ENCODE measurements at regions of chr10 and their contacts with region 1.

Region 1: GRCh38 chr10:89217057-89217990 is 10.2 kb upstream of the CH25H start:
- DNase-seq: peak; percentile 30
- H3K4me3 ChIP-seq: no peak overlapping the region; a peak in 1 of 4 replicates
- H3K27ac ChIP-seq: peak overlapping the region; percentile 30 to 55
- H3K4me1 ChIP-seq: peaks cover 4 to 14% of the 10 kb centered on the region in 2 experiments; a peak in 3 of 4 replicates
- H3K27me3 ChIP-seq: no peaks in the 10 kb centered on the region
- CTCF ChIP-seq: peak; percentile 91
- EP300 ChIP-seq: no peak
- RAD21 ChIP-seq: peak; percentile 78

Region 2: GRCh38 chr10:88828310-88828709 is 389.0 kb before region 1 on chr10:
- CTCF ChIA-PET with region 1: no interaction called
- POLR2A ChIA-PET with region 1: no interaction called
- DNase-seq: no peak
- H3K4me3 ChIP-seq: no peak overlapping the region
- H3K27ac ChIP-seq: no peak overlapping the region
- H3K4me1 ChIP-seq: peaks cover 0 to 2% of the 10 kb centered on the region in 2 experiments; a peak in 1 of 4 replicates
- H3K27me3 ChIP-seq: no peaks in the 10 kb centered on the region
- CTCF ChIP-seq: no peak
- EP300 ChIP-seq: no peak
- RAD21 ChIP-seq: no peak

Region 3: DNA sequence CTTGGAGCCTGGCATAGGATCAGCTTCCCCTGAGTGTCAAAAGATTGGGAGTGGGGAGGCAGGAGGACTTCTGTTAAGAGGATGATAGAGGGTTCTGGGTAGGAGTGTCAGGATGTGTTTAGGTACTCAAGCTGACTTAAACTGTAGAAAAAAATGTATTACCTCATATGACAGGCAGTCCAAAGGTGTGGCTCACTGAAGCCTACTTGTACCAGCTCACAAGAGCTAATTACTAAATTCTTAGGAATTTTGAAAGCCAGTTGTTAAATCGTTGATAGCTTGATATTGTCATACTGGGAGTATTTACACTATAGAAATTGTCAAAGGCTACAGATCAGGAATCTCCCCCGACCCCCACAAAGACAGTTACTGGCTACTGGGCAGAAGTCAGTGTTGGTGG is 194.6 kb before region 1 on chr10:
- CTCF ChIA-PET with region 1: interaction called, 15 read pairs
- POLR2A ChIA-PET with region 1: no interaction called
- DNase-seq: no peak
- H3K4me3 ChIP-seq: no peak overlapping the region
- H3K27ac ChIP-seq: no peak overlapping the region
- H3K4me1 ChIP-seq: no peaks in the 10 kb centered on the region
- H3K27me3 ChIP-seq: no peaks in the 10 kb centered on the region
- CTCF ChIP-seq: no peak
- EP300 ChIP-seq: no peak
- RAD21 ChIP-seq: no peak

Region 4: DNA sequence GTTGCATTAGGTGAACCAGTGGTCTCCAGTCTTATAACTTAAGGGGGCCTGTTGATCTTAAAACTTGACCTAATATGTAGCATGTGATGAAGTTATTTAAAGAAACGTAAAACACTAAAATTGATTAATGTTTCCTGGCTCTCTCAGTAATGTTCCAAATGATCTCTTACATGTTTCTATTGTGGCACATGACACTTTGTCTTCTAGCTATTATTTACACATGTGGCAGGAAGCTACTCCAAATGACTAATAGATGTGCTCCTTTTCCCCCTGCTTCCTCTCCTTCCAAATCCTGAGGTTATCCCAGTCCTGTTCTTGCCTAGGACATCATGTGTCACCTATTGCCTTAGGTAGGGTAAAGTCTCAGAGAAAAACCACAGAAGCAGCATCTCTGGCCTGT is 137.4 kb before region 1 on chr10:
- CTCF ChIA-PET with region 1: no interaction called
- POLR2A ChIA-PET with region 1: no interaction called
- DNase-seq: no peak
- H3K4me3 ChIP-seq: no peak overlapping the region
- H3K27ac ChIP-seq: no peak overlapping the region; a peak in 1 of 4 replicates
- H3K4me1 ChIP-seq: peaks cover 0 to 3% of the 10 kb centered on the region in 2 experiments; a peak in 3 of 4 replicates
- H3K27me3 ChIP-seq: no peaks in the 10 kb centered on the region
- CTCF ChIP-seq: no peak
- EP300 ChIP-seq: no peak
- RAD21 ChIP-seq: no peak

Region 5: DNA sequence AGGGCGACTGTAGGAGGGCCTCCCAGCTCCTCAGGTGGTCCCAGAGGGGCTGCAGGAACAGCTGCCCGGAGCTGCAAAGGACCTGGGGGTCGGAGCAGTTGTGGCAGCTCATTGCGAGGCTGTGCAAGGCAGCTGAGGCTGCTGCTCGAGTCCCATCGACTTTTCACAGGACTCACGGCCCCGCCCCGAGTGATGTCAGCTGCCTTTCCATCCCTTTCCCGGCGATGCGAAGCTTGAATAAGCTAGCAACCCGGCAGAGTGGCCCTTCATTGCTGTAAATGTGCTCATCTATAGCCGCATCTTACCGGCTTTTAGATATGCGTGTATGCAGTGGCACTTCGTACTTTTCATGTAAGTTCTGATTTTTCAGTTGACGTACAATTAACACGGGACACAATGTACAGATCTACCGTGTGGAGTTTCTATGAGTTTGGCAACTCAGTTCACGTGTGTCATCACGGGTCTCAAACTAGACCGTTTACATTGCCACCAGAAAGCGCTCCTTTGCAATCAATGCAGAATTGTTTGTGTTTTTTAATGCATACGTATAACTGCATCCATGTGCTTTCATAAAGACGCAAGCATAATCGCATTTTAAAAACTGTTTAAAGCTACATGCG is 10.0 kb before region 1 on chr10 and contains the start of gene CH25H:
- CTCF ChIA-PET with region 1: interaction called, 34 read pairs
- POLR2A ChIA-PET with region 1: no interaction called
- DNase-seq: peak; percentile 72
- H3K4me3 ChIP-seq: peak within 1 kb of the TSS; percentile 49 to 67
- H3K27ac ChIP-seq: no peak within 1 kb of the TSS
- H3K4me1 ChIP-seq: peaks cover 7 to 19% of the 10 kb centered on the region in 2 experiments; a peak in 3 of 4 replicates
- H3K27me3 ChIP-seq: peaks cover 22% of the 10 kb centered on the region; the same call in 1 of the 2 replicates
- CTCF ChIP-seq: no peak
- EP300 ChIP-seq: no peak
- RAD21 ChIP-seq: no peak
- polyA plus RNA-seq, gene CH25H: not detected in 2 replicates

Region 6: GRCh38 chr10:89235073-89235798 is 17.9 kb after region 1 on chr10:
- CTCF ChIA-PET with region 1: interaction called, 21 read pairs
- POLR2A ChIA-PET with region 1: no interaction called
- DNase-seq: no peak
- H3K4me3 ChIP-seq: no peak overlapping the region
- H3K27ac ChIP-seq: no peak overlapping the region
- H3K4me1 ChIP-seq: no peaks in the 10 kb centered on the region
- H3K27me3 ChIP-seq: no peaks in the 10 kb centered on the region
- CTCF ChIP-seq: no peak
- EP300 ChIP-seq: no peak
- RAD21 ChIP-seq: no peak

Region 7: GRCh38 chr10:89369156-89370105 is 152.1 kb after region 1 on chr10:
- CTCF ChIA-PET with region 1: interaction called, 12 read pairs
- POLR2A ChIA-PET with region 1: no interaction called
- DNase-seq: peak; percentile 35
- H3K4me3 ChIP-seq: no peak overlapping the region
- H3K27ac ChIP-seq: no peak overlapping the region
- H3K4me1 ChIP-seq: peaks cover 13 to 15% of the 10 kb centered on the region in 2 experiments
- H3K27me3 ChIP-seq: no peaks in the 10 kb centered on the region
- CTCF ChIP-seq: peak; percentile 81
- EP300 ChIP-seq: no peak
- RAD21 ChIP-seq: peak; percentile 73

Region 8: GRCh38 chr10:90047243-90047729 is 830.0 kb after region 1 on chr10:
- CTCF ChIA-PET with region 1: no interaction called
- POLR2A ChIA-PET with region 1: no interaction called
- DNase-seq: no peak
- H3K4me3 ChIP-seq: no peak overlapping the region
- H3K27ac ChIP-seq: no peak overlapping the region
- H3K4me1 ChIP-seq: no peaks in the 10 kb centered on the region
- H3K27me3 ChIP-seq: no peaks in the 10 kb centered on the region
- CTCF ChIP-seq: no peak
- EP300 ChIP-seq: no peak
- RAD21 ChIP-seq: no peak